Activated B cell treated with CpG ODN at 0.5 μM for 24 hours (primary cell): ENCODE measurements at regions of chr9 and their contacts with region 1.

Region 1: GRCh38 chr9:4984621-4985385 is at the start of gene JAK2:
- DNase-seq: peak; percentile 83
- ATAC-seq: peak; percentile 80
- H3K4me3 Mint-ChIP-seq: peak within 1 kb of the TSS; percentile 87
- H3K27ac Mint-ChIP-seq: peak within 1 kb of the TSS; percentile 95
- H3K4me1 Mint-ChIP-seq: peaks cover 48% of the 10 kb centered on the region
- H3K27me3 Mint-ChIP-seq: no peaks in the 10 kb centered on the region
- CTCF ChIP-seq: no peak
- total RNA-seq, gene JAK2: 19.2 and 21.3 TPM in 2 replicates

Region 2: DNA sequence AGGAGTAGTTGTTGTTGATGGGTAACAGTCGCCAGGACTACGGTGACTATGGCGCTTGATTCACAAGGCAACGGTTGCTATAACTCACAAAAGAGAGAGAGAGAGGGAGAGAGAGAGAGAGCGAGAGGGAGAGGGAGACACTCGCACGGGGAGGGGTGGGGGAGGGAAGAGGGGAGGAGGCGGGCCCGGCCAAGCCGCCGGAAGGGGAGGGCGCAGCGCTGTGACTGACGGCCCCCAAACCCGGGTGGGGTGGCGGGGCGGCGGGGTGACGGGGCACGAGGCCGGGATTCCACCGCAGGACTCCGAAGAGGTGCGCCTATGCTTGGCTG is 1459.0 kb before region 1 on chr9 and contains the start of gene RFX3:
- CTCF ChIA-PET with region 1: no interaction called
- POLR2A ChIA-PET with region 1: no interaction called
- intact Hi-C with region 1: loop called (anchors 5 kb)
- DNase-seq: no peak
- ATAC-seq: peak; percentile 61
- H3K4me3 Mint-ChIP-seq: peak within 1 kb of the TSS; percentile 97
- H3K27ac Mint-ChIP-seq: peak within 1 kb of the TSS; percentile 100
- H3K4me1 Mint-ChIP-seq: peaks cover 60% of the 10 kb centered on the region
- H3K27me3 Mint-ChIP-seq: no peaks in the 10 kb centered on the region
- CTCF ChIP-seq: no peak
- total RNA-seq, gene RFX3: 34.6 and 39.1 TPM in 2 replicates

Region 3: DNA sequence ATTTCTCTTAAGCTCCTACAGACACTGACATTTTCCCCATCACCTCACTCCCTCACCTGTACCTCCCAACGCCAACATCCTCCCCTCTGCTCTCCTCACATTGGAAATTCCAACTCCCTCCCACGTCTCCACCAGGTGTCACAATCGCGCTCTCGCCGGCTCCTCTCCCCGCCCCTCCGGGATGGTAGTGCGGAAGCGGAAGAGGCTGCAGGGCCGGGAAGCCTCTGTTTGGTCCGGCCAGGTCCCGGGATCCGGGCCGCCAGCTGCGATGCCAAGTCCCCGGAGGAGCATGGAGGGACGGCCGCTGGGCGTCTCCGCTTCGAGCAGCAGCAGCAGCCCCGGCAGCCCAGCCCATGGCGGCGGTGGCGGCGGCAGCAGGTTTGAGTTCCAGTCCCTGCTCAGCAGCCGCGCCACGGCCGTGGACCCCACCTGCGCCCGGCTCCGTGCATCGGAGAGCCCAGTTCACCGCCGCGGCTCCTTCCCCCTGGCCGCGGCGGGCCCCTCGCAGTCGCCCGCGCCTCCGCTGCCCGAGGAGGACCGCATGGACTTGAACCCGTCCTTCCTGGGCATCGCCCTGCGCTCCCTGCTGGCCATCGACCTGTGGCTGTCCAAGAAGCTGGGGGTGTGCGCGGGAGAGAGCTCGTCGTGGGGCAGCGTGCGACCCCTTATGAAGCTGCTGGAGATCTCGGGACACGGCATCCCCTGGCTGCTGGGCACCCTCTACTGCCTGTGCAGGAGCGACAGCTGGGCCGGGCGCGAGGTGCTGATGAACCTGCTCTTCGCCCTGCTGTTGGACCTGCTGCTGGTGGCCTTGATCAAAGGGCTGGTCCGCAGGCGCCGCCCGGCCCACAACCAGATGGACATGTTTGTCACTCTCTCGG is 322.5 kb before region 1 on chr9 and contains the start of gene PLPP6:
- CTCF ChIA-PET with region 1: no interaction called
- POLR2A ChIA-PET with region 1: no interaction called
- intact Hi-C with region 1: loop called (anchors 5 kb)
- DNase-seq: peak; percentile 66
- ATAC-seq: peak; percentile 87
- H3K4me3 Mint-ChIP-seq: peak within 1 kb of the TSS; percentile 92
- H3K27ac Mint-ChIP-seq: peak within 1 kb of the TSS; percentile 80
- H3K4me1 Mint-ChIP-seq: peaks cover 47% of the 10 kb centered on the region
- H3K27me3 Mint-ChIP-seq: peaks cover 8% of the 10 kb centered on the region
- CTCF ChIP-seq: no peak
- total RNA-seq, gene PLPP6: 8.5 and 10.2 TPM in 2 replicates

Region 4: GRCh38 chr9:4792572-4793458 is 192.0 kb before region 1 on chr9 and contains the start of gene RCL1:
- CTCF ChIA-PET with region 1: interaction called, 6 read pairs
- POLR2A ChIA-PET with region 1: interaction called, 23 read pairs
- intact Hi-C with region 1: loop called (anchors 1 kb)
- DNase-seq: peak; percentile 97
- ATAC-seq: peak; percentile 93
- H3K4me3 Mint-ChIP-seq: peak within 1 kb of the TSS; percentile 97
- H3K27ac Mint-ChIP-seq: peak within 1 kb of the TSS; percentile 96
- H3K4me1 Mint-ChIP-seq: peaks cover 40% of the 10 kb centered on the region
- H3K27me3 Mint-ChIP-seq: peaks cover 2% of the 10 kb centered on the region
- CTCF ChIP-seq: no peak
- total RNA-seq, gene RCL1: 23.9 and 26.0 TPM in 2 replicates

Region 5: DNA sequence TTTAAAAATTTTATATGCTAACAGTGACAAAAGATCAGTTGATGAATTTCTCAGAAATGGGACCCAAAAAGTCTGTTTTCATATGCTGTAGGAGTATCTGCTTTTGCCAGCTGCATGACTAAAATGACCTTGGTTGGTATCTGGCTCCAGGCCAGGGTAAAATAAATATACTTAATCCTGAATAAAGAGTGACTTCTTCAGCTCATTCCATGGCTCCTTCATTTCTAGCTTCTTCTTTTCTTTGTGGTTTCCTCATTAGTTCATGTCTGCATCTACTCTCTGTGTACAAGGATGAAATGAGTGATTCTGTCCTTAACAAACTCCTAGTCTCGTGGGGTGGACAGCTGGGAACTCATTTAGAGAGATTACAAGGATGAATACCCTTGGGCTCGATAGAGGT is 156.0 kb before region 1 on chr9:
- CTCF ChIA-PET with region 1: no interaction called
- POLR2A ChIA-PET with region 1: no interaction called
- intact Hi-C with region 1: no loop called
- DNase-seq: no peak
- ATAC-seq: no peak
- H3K4me3 Mint-ChIP-seq: no peak overlapping the region
- H3K27ac Mint-ChIP-seq: no peak overlapping the region
- H3K4me1 Mint-ChIP-seq: peaks cover 4% of the 10 kb centered on the region
- H3K27me3 Mint-ChIP-seq: no peaks in the 10 kb centered on the region
- CTCF ChIP-seq: no peak

Region 6: DNA sequence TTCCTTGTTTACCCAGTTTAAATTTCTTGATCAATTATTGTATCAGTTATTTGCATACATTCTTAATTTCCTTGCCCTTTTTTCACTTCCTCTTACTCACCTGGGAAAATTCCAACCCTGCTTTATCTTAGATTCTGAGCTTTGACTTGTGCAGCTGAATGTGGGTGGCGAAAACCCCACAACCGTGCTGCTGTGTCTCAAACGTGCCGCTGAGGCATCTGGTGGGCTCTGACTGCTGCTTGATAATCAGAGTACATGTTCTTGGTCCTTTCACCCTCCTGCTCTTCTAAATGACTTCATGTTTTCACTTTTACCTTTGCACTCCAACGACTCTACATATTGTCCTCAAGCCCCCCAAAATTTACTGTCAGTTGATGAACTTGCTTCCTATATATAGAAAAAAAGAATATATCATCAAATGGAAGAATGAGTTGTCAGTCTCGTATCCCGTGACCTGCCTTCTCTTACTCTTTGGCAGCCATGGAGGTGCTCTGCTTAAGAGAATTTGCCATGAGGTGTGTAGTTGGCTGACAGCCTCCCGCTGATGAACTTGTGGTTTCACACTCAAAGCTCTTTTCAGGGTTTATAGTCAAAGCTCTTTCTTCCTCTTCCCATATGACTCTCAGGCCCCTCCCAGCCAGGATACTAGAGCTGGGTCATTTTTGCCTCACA is 13.7 kb before region 1 on chr9:
- CTCF ChIA-PET with region 1: interaction called, 8 read pairs
- POLR2A ChIA-PET with region 1: interaction called, 28 read pairs
- intact Hi-C with region 1: loop called (anchors 1 kb)
- DNase-seq: no peak
- ATAC-seq: peak; percentile 91
- H3K4me3 Mint-ChIP-seq: no peak overlapping the region
- H3K27ac Mint-ChIP-seq: no peak overlapping the region
- H3K4me1 Mint-ChIP-seq: peaks cover 18% of the 10 kb centered on the region
- H3K27me3 Mint-ChIP-seq: no peaks in the 10 kb centered on the region
- CTCF ChIP-seq: no peak

Region 7: GRCh38 chr9:6008169-6008979 is 1023.6 kb after region 1 on chr9:
- CTCF ChIA-PET with region 1: no interaction called
- POLR2A ChIA-PET with region 1: no interaction called
- intact Hi-C with region 1: loop called (anchors 2 kb)
- DNase-seq: peak; percentile 82
- ATAC-seq: peak; percentile 75
- H3K4me3 Mint-ChIP-seq: peak overlapping the region; percentile 85
- H3K27ac Mint-ChIP-seq: peak overlapping the region; percentile 87
- H3K4me1 Mint-ChIP-seq: peaks cover 57% of the 10 kb centered on the region
- H3K27me3 Mint-ChIP-seq: no peaks in the 10 kb centered on the region
- CTCF ChIP-seq: no peak